OCI-LY7 (cell line): ENCODE measurements at regions of chr1 and their contacts with region 1.

Region 1: GRCh38 chr1:203861379-203862184 is at the start of gene SNRPE:
- DNase-seq: peak; percentile 99
- H3K4me3 ChIP-seq: peak within 1 kb of the TSS; percentile 90
- H3K27ac ChIP-seq: peak within 1 kb of the TSS; percentile 58
- H3K4me1 ChIP-seq: peaks cover 17% of the 10 kb centered on the region
- CTCF ChIP-seq: peak; percentile 83
- total RNA-seq, gene SNRPE: 95.9 and 109 TPM in 2 replicates

Region 2: GRCh38 chr1:203504397-203505250 is 357.0 kb before region 1 on chr1:
- CTCF ChIA-PET with region 1: no interaction called
- POLR2A ChIA-PET with region 1: no interaction called
- intact Hi-C with region 1: loop called (anchors 10 kb)
- DNase-seq: peak; percentile 81
- H3K4me3 ChIP-seq: no peak overlapping the region
- H3K27ac ChIP-seq: no peak overlapping the region
- H3K4me1 ChIP-seq: no peaks in the 10 kb centered on the region
- CTCF ChIP-seq: peak; percentile 96

Region 3: GRCh38 chr1:203898458-203899244 is 37.1 kb after region 1 on chr1:
- CTCF ChIA-PET with region 1: no interaction called
- POLR2A ChIA-PET with region 1: no interaction called
- intact Hi-C with region 1: no loop called
- DNase-seq: no peak
- H3K4me3 ChIP-seq: no peak overlapping the region
- H3K27ac ChIP-seq: no peak overlapping the region
- H3K4me1 ChIP-seq: no peaks in the 10 kb centered on the region
- CTCF ChIP-seq: no peak

Region 4: GRCh38 chr1:203937644-203938330 is 76.2 kb after region 1 on chr1:
- CTCF ChIA-PET with region 1: no interaction called
- POLR2A ChIA-PET with region 1: no interaction called
- intact Hi-C with region 1: loop called (anchors 5 kb)
- DNase-seq: peak; percentile 86
- H3K4me3 ChIP-seq: peak overlapping the region; percentile 5
- H3K27ac ChIP-seq: peak overlapping the region; percentile 91
- H3K4me1 ChIP-seq: peaks cover 67% of the 10 kb centered on the region
- CTCF ChIP-seq: no peak

Region 5: DNA sequence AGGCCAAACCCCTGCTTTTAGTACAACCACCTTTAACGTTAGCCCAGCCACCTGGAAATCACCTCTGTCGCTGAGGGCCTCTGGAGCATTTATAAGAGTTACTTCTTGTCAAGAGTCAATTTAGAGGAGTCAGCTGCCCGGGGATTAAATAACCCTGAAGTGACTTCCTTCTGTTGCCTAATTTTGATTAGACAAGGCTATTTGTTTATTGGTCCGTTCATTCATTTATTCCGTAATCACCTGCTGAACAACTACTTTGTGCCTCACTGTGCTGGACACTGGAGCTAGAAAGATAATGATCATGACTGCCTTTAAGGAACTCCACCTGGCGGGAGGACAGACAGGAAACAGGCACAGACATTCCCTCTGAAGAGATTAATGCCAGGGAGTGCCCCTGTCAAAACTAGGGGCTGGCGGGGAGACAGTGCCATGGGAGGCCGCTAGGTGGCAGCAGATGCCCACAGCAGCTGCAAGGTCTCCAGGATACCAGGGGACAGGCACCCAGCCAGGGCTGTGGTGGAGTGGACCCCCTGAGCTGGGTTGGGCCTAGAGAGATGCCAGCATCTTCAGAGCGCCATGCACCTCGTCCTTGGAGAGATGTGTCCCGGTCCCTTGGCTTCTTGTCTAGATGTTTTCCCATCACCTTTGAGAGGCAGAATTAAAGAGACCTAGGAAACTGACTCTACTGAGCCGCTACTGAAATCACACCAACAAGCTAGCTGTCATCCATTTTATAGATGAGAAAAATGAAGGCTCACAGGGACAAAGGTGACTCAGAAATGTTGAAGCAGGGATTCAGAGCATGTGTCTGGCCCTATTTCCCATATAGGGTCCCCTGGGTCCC is 300.9 kb after region 1 on chr1:
- CTCF ChIA-PET with region 1: no interaction called
- POLR2A ChIA-PET with region 1: no interaction called
- intact Hi-C with region 1: loop called (anchors 1 kb)
- DNase-seq: peak; percentile 64
- H3K4me3 ChIP-seq: no peak overlapping the region
- H3K27ac ChIP-seq: no peak overlapping the region
- H3K4me1 ChIP-seq: no peaks in the 10 kb centered on the region
- CTCF ChIP-seq: peak; percentile 98

Region 6: GRCh38 chr1:204363335-204364124 is 501.9 kb after region 1 on chr1:
- CTCF ChIA-PET with region 1: no interaction called
- POLR2A ChIA-PET with region 1: no interaction called
- intact Hi-C with region 1: loop called (anchors 1 kb)
- DNase-seq: peak; percentile 78
- H3K4me3 ChIP-seq: peak overlapping the region; percentile 41
- H3K27ac ChIP-seq: no peak overlapping the region
- H3K4me1 ChIP-seq: peaks cover 5% of the 10 kb centered on the region
- CTCF ChIP-seq: peak; percentile 92